A549 (cell line): ENCODE measurements at regions of chr9 and their contacts with region 1.

Region 1: DNA sequence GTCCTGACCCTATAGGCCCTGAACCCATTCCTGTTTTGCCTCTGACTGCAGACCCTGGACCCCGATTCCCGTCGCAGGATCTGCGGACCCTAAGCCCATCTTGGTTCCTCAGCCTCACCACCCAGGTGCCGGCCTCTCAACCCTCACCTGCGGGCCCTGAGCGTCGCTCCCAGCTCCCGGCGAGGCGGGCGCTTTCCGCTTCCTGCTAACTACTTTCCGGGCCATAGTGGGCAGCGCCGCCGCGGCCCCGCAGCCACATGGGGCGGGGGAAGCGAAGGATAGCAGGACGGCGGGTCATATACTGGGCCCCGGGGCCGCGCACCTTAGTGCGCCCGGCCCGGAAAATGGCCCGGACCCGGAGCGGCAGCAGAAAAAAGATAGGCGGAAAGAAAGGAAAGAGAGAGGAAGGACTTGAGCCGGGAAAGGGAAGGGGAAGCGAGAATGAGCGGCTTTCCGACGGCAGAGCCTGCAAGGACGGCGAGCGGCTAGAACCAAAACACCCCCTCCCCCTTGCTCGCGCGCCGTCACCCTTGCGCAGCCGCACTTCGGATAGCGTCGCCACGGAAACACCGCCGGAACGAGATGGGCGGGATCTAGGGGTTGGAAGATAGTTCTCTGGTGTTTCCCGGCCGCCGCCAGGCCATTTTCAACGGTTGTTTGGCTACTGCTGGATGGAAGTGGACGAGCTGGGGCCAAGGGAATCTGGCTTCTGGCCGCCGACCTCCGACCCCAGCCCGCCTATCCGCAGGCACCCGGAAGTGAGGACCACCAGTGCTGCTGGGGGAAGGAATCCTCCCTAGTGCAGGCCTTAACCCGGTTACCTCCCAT is at the start of gene DCAF12:
- DNase-seq: peak; percentile 91 to 93
- ATAC-seq: peak; percentile 95 to 96
- H3K4me3 ChIP-seq: peak within 1 kb of the TSS; percentile 69
- H3K27ac ChIP-seq: peak within 1 kb of the TSS; percentile 88 to 89
- H3K4me1 ChIP-seq: peaks cover 27% of the 10 kb centered on the region
- CTCF ChIP-seq: no peak
- EP300 ChIP-seq: no peak
- POLR2A ChIP-seq: peak; percentile 51
- RAD21 ChIP-seq: no peak
- polyA plus RNA-seq, gene DCAF12: 56.5 and 73.6 TPM in 2 replicates

Region 2: GRCh38 chr9:34139477-34140146 is 13.2 kb after region 1 on chr9:
- CTCF ChIA-PET with region 1: interaction called, 10 read pairs
- POLR2A ChIA-PET with region 1: interaction called, 4 read pairs
- DNase-seq: peak; percentile 36 to 70
- ATAC-seq: peak; percentile 86 to 93
- H3K4me3 ChIP-seq: no peak overlapping the region
- H3K27ac ChIP-seq: no peak overlapping the region
- H3K4me1 ChIP-seq: peaks cover 19% of the 10 kb centered on the region; the same call in 2 of the 3 replicates
- CTCF ChIP-seq: peak; percentile 40; the same call in 2 of the 3 replicates
- EP300 ChIP-seq: no peak
- POLR2A ChIP-seq: no peak
- RAD21 ChIP-seq: peak; percentile 27 to 47; a peak in 3 of 5 replicates